ENCODE measurements at regions of chr7 and their contacts with region 1.

Region 1: GRCh38 chr7:29189743-29190201 is 4.8 kb upstream of the CHN2 start:
- DNase-seq: peak; percentile 72 to 88 (median 82)
- ATAC-seq: peak; percentile 64 to 84 (median 74)
- H3K4me3 ChIP-seq: peak overlapping the region in 2 of 4 donors; percentile 21 to 30
- H3K27ac ChIP-seq: peak overlapping the region; percentile 67 to 95 (median 88)
- H3K4me1 ChIP-seq: peaks cover 12 to 32% (median 23%) of the 10 kb centered on the region in 3 donors
- H3K27me3 ChIP-seq: no peaks in the 10 kb centered on the region
- CTCF ChIP-seq: peak; percentile 63 to 86 (median 82)

Region 2: GRCh38 chr7:29224726-29225125 is 35.0 kb after region 1 on chr7:
- intact Hi-C with region 1: no loop called
- DNase-seq: no peak
- ATAC-seq: no peak
- H3K4me3 ChIP-seq: no peak overlapping the region
- H3K27ac ChIP-seq: no peak overlapping the region
- H3K4me1 ChIP-seq: no peaks in the 10 kb centered on the region
- H3K27me3 ChIP-seq: no peaks in the 10 kb centered on the region
- CTCF ChIP-seq: no peak

Region 3: GRCh38 chr7:29345600-29345999 is 155.8 kb after region 1 on chr7:
- intact Hi-C with region 1: loop called in 1 of 3 experiments (anchors 10 kb)
- DNase-seq: peak in 5 of 6 donors; percentile 32 to 70 (median 51)
- ATAC-seq: peak; percentile 64 to 87 (median 80)
- H3K4me3 ChIP-seq: no peak overlapping the region
- H3K27ac ChIP-seq: no peak overlapping the region
- H3K4me1 ChIP-seq: peaks cover 12 to 19% (median 17%) of the 10 kb centered on the region in 3 donors
- H3K27me3 ChIP-seq: no peaks in the 10 kb centered on the region
- CTCF ChIP-seq: peak in 3 of 4 donors; percentile 15 to 28 (median 21)

Region 4: GRCh38 chr7:29360633-29361625 is 171.2 kb after region 1 on chr7:
- intact Hi-C with region 1: no loop called
- DNase-seq: no peak
- ATAC-seq: peak; percentile 40 to 58 (median 49)
- H3K4me3 ChIP-seq: no peak overlapping the region
- H3K27ac ChIP-seq: no peak overlapping the region
- H3K4me1 ChIP-seq: no peaks in the 10 kb centered on the region
- H3K27me3 ChIP-seq: no peaks in the 10 kb centered on the region
- CTCF ChIP-seq: no peak

Region 5: DNA sequence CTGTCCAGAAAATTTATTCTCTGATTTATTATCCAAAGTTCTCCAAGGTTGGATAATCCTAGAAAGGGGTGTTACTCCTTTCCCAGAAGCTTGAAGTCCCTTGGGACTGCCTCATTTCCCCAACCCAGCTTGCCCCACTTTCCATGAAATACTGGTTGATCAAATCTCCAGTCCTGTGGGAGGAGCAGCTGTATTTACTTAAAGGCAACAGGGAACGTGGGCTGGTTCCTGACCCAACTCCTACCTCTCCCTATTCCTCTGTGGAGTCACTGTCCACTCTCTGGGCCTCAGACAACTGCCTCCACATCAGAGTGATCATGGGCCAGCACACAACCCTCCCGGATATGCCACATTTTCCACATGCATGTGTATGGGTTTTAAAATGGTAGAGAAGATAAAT is 207.6 kb after region 1 on chr7:
- intact Hi-C with region 1: loop called in 1 of 3 experiments (anchors 10 kb)
- DNase-seq: no peak
- ATAC-seq: peak; percentile 24 to 70 (median 52)
- H3K4me3 ChIP-seq: no peak overlapping the region
- H3K27ac ChIP-seq: no peak overlapping the region
- H3K4me1 ChIP-seq: peaks cover 0 to 8% (median 6%) of the 10 kb centered on the region in 3 donors
- H3K27me3 ChIP-seq: no peaks in the 10 kb centered on the region
- CTCF ChIP-seq: no peak